PC-3 (cell line): ENCODE measurements at regions of chr20 and their contacts with region 1.

Region 1: DNA sequence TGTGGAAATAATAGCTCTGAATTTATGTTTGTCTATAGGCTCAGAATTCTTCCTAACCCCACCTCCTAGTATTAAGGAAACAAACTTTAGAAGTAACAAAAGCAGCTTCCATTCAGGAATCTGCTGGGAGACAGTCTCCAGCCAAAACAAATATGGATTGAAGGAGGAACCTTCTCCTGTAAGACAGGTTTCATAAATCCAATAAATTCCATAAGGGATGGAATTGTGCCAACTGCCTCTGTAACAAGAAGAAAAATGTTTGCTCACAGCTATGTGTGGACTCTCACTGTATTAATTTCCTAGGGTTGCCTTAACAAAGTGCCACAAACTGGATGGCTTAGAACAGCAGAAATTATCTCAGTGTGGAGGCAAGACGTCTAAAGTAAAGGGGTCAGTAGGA is 7.5 kb downstream of the SYCP2 start:
- DNase-seq: peak; percentile 97
- ATAC-seq: peak; percentile 94
- H3K4me3 ChIP-seq: peak overlapping the region; percentile 1; the same call in 1 of the 2 replicates
- H3K27ac ChIP-seq: peak overlapping the region; percentile 23
- H3K4me1 ChIP-seq: peaks cover 32% of the 10 kb centered on the region
- H3K27me3 ChIP-seq: no peaks in the 10 kb centered on the region
- CTCF ChIP-seq: no peak

Region 2: GRCh38 chr20:59873409-59873808 is 52.5 kb before region 1 on chr20:
- CTCF ChIA-PET with region 1: no interaction called
- POLR2A ChIA-PET with region 1: no interaction called
- intact Hi-C with region 1: no loop called
- DNase-seq: no peak
- ATAC-seq: no peak
- H3K4me3 ChIP-seq: no peak overlapping the region
- H3K27ac ChIP-seq: no peak overlapping the region
- H3K4me1 ChIP-seq: no peaks in the 10 kb centered on the region
- H3K27me3 ChIP-seq: no peaks in the 10 kb centered on the region
- CTCF ChIP-seq: no peak

Region 3: GRCh38 chr20:59902445-59902844 is 23.5 kb before region 1 on chr20:
- CTCF ChIA-PET with region 1: no interaction called
- POLR2A ChIA-PET with region 1: no interaction called
- intact Hi-C with region 1: loop called (anchors 1 kb)
- DNase-seq: no peak
- ATAC-seq: peak; percentile 70
- H3K4me3 ChIP-seq: no peak overlapping the region
- H3K27ac ChIP-seq: no peak overlapping the region
- H3K4me1 ChIP-seq: peaks cover 4% of the 10 kb centered on the region; the same call in 1 of the 2 replicates
- H3K27me3 ChIP-seq: no peaks in the 10 kb centered on the region
- CTCF ChIP-seq: no peak

Region 4: GRCh38 chr20:59940174-59940971 is 14.4 kb after region 1 on chr20 and contains the starts of genes FAM217B and PPP1R3D:
- CTCF ChIA-PET with region 1: interaction called, 10 read pairs
- POLR2A ChIA-PET with region 1: interaction called, 5 read pairs
- intact Hi-C with region 1: no loop called
- DNase-seq: peak; percentile 96
- ATAC-seq: peak; percentile 90
- H3K4me3 ChIP-seq: peak within 1 kb of the TSS; percentile 72
- H3K27ac ChIP-seq: peak within 1 kb of the TSS; percentile 73
- H3K4me1 ChIP-seq: peaks cover 36% of the 10 kb centered on the region
- H3K27me3 ChIP-seq: no peaks in the 10 kb centered on the region
- CTCF ChIP-seq: no peak
- total RNA-seq, gene FAM217B: 6.3 and 7.2 TPM in 2 replicates
- total RNA-seq, gene PPP1R3D: 5.6 and 6.3 TPM in 2 replicates